IMR-90 (cell line): ENCODE measurements at regions of chr10 and their contacts with region 1.

Region 1: DNA sequence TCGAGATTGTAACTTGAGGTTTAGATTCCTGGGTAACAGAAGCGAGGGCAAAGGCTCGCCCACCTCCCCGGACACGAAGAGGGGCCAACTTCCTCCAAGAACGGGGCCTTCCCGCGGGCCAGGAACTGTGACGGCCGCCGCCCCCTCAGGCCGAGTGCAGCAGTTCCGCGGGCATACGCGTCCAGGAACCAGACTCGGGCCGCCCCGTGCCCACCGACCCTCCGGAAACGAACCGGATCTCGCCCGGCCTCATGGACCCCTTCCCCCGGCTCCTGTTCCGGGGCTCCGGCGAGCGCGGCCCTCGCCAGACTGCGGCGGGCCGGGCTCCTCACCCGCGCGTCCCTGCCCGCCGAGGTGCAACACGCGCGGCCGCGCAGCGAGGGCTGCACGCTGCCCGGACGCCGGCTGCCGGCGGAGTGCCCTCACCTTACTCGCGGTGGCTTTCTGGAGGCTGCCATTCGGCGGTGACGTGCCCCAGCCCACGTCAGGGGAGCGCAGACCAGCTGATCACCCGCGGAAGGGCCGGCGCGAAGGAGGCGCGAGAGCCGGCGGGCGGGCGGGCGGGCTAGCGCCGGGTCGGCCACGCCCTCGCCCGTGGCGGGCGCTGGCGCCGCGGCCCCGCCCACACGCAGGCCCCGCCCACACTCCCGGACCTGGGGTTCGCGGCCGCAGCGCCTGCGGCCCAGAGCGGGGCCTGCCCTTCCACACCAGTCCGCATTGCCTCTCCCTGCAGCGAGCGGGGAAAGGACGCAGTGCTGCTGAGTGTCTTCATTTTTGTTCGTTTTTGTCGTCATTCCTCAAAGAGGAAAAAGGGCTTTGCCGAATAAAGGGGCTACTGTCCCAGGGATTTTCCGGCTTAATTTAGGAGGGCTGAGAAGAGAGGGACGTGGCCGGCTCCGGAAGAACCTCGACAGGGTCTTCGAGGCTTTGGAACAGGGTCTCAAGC is at the start of gene XPNPEP1:
- DNase-seq: peak; percentile 83
- ATAC-seq: peak; percentile 99
- H3K4me3 ChIP-seq: peak within 1 kb of the TSS; percentile 79
- H3K27ac ChIP-seq: peak within 1 kb of the TSS; percentile 91
- H3K4me1 ChIP-seq: peaks cover 10% of the 10 kb centered on the region
- H3K27me3 ChIP-seq: no peaks in the 10 kb centered on the region
- CTCF ChIP-seq: no peak
- POLR2A ChIP-seq: peak; percentile 98
- RAD21 ChIP-seq: no peak
- total RNA-seq, gene XPNPEP1: 136 and 164 TPM in 2 replicates

Region 2: DNA sequence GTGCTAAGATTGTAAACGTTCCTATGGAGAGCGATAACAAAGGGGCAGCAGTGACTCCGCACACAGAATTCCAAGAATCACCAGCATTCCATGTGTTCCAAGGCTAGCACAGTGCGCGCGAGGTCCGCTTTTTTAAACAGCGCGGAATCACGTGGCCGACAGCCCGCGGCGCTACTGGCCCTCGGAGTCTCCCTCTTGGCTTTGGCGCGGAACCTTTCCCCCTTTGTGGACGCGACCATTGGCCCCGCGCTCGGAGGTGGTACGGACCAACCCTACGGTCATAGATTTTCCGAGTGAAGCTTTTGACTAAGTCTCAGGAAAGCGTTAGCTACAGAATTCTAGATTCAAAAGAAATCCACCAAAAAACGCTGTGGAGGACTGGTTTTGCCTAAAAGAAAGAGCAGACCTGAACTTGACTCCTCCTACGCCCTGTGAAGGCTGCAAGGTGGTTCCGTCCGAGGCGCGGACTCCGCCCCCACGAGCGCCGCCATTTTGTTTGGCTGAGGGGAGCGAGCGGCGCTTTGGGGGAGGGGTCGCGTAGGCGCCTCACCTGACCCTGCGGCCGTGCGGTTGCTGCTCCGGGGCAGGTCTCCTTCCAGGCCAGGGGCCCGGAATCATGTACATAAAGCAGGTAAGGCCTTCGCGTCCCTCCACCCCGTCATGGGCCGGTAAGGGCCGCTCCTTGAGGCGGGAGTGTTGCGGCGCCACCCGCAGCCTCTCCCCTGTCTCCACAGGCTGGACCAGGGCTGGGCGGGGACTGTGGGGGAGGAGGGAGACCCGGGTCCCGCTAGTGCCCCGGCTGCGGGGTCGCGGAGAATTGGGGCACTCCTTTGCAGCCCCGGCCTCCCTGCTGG is 644.2 kb after region 1 on chr10 and contains the start of gene SMC3:
- CTCF ChIA-PET with region 1: no interaction called
- POLR2A ChIA-PET with region 1: no interaction called
- dilution Hi-C with region 1: no loop called
- in situ Hi-C with region 1: loop called (anchors 25 kb)
- intact Hi-C with region 1: no loop called
- DNase-seq: peak; percentile 96
- ATAC-seq: peak; percentile 91
- H3K4me3 ChIP-seq: peak within 1 kb of the TSS; percentile 77
- H3K27ac ChIP-seq: peak within 1 kb of the TSS; percentile 87
- H3K4me1 ChIP-seq: peaks cover 5% of the 10 kb centered on the region
- H3K27me3 ChIP-seq: no peaks in the 10 kb centered on the region
- CTCF ChIP-seq: no peak
- POLR2A ChIP-seq: no peak; the same call in 1 of the 2 replicates
- RAD21 ChIP-seq: no peak
- total RNA-seq, gene SMC3: 15.2 and 30.0 TPM in 2 replicates